Spleen (tissue), 13 donors: ENCODE measurements at regions of chr2 and their contacts with region 1.

Region 1: GRCh38 chr2:177348733-177349693 is 43.6 kb upstream of the AGPS start:
- DNase-seq: no peak
- H3K4me3 ChIP-seq: no peak overlapping the region
- H3K27ac ChIP-seq: no peak overlapping the region
- H3K4me1 ChIP-seq: peaks cover 8 to 19% (median 12%) of the 10 kb centered on the region in 6 donors
- H3K27me3 ChIP-seq: no peaks in the 10 kb centered on the region
- CTCF ChIP-seq: no peak
- POLR2A ChIP-seq: no peak

Region 2: GRCh38 chr2:177056481-177056929 is 292.5 kb before region 1 on chr2:
- intact Hi-C with region 1: no loop called
- DNase-seq: no peak
- H3K4me3 ChIP-seq: no peak overlapping the region
- H3K27ac ChIP-seq: no peak overlapping the region
- H3K4me1 ChIP-seq: no peaks in the 10 kb centered on the region
- H3K27me3 ChIP-seq: no peaks in the 10 kb centered on the region
- CTCF ChIP-seq: no peak
- POLR2A ChIP-seq: no peak

Region 3: GRCh38 chr2:177445200-177445599 is 96.2 kb after region 1 on chr2:
- intact Hi-C with region 1: no loop called
- DNase-seq: no peak
- H3K4me3 ChIP-seq: no peak overlapping the region
- H3K27ac ChIP-seq: no peak overlapping the region
- H3K4me1 ChIP-seq: no peaks in the 10 kb centered on the region
- H3K27me3 ChIP-seq: no peaks in the 10 kb centered on the region
- CTCF ChIP-seq: no peak
- POLR2A ChIP-seq: no peak

Region 4: GRCh38 chr2:177763532-177764265 is 414.7 kb after region 1 on chr2:
- intact Hi-C with region 1: loop called (anchors 10 kb)
- DNase-seq: peak; percentile 88
- H3K4me3 ChIP-seq: peak overlapping the region in 2 of 8 donors; percentile 19 to 47
- H3K27ac ChIP-seq: no peak overlapping the region
- H3K4me1 ChIP-seq: peaks cover 0 to 13% (median 8%) of the 10 kb centered on the region in 6 donors
- H3K27me3 ChIP-seq: peaks cover 0 to 17% (median 0%) of the 10 kb centered on the region in 7 donors
- CTCF ChIP-seq: peak in 10 of 11 experiments; percentile 41 to 93 (median 84)
- POLR2A ChIP-seq: no peak